ENCODE measurements at regions of chr7 and their contacts with region 1.

Region 1: GRCh38 chr7:151769188-151769841 is 107.6 kb downstream of the PRKAG2 start:
- DNase-seq: peak; percentile 81
- ATAC-seq: peak; percentile 93
- H3K4me3 Mint-ChIP-seq: peak overlapping the region; percentile 75
- H3K27ac Mint-ChIP-seq: peak overlapping the region; percentile 99
- H3K4me1 Mint-ChIP-seq: peaks cover 66% of the 10 kb centered on the region
- H3K27me3 Mint-ChIP-seq: no peaks in the 10 kb centered on the region

Region 2: DNA sequence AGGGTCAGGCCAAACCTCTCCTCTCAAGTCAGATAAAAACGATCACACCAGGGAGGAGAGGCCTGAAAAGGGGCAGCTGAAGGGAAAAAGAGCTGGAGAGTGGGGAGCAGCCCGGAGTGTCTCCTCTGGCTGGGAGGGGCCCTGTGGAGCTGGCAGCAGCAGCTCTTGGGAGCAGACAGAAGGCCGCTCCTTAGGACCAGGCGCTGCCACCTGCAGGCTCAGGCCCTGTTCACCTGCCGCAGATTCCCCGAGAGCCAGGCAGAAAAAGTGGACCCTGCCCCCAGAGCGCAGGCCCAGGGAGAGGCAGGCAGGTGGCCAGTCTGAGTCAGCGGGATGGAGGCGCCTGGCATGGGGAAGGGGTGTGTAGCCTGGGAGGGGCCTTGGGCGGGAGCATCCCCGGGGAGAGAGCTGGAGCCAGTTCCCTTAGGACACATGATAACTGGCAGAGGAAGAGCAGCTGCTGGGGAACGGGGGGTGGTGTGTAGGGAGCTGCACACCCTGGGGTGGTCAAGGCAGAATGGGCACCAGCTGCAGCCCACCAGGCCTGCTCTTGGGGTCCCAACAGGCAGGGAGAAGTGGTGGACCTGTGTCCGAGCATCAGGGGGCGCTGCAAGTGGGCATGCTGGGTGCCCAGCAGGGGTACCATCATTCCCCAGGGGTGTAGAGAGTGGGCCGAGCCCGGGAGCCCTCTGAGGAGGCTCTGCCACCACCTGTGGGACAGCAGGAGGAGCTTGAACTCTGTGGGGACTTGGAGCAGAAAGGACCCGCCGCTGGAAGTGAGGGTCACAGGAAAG is 72.4 kb before region 1 on chr7:
- CTCF ChIA-PET with region 1: no interaction called
- POLR2A ChIA-PET with region 1: no interaction called
- DNase-seq: no peak
- ATAC-seq: no peak
- H3K4me3 Mint-ChIP-seq: no peak overlapping the region
- H3K27ac Mint-ChIP-seq: no peak overlapping the region
- H3K4me1 Mint-ChIP-seq: peaks cover 6% of the 10 kb centered on the region
- H3K27me3 Mint-ChIP-seq: no peaks in the 10 kb centered on the region

Region 3: GRCh38 chr7:151754142-151754590 is 15.1 kb before region 1 on chr7:
- CTCF ChIA-PET with region 1: interaction called, 97 read pairs
- POLR2A ChIA-PET with region 1: interaction called, 11 read pairs
- DNase-seq: no peak
- ATAC-seq: no peak
- H3K4me3 Mint-ChIP-seq: no peak overlapping the region
- H3K27ac Mint-ChIP-seq: no peak overlapping the region
- H3K4me1 Mint-ChIP-seq: peaks cover 24% of the 10 kb centered on the region
- H3K27me3 Mint-ChIP-seq: no peaks in the 10 kb centered on the region

Region 4: GRCh38 chr7:151900986-151901621 is 131.8 kb after region 1 on chr7:
- CTCF ChIA-PET with region 1: no interaction called
- POLR2A ChIA-PET with region 1: no interaction called
- DNase-seq: no peak
- ATAC-seq: no peak
- H3K4me3 Mint-ChIP-seq: no peak overlapping the region
- H3K27ac Mint-ChIP-seq: no peak overlapping the region
- H3K4me1 Mint-ChIP-seq: no peaks in the 10 kb centered on the region
- H3K27me3 Mint-ChIP-seq: peaks cover 13% of the 10 kb centered on the region

Measured in activated CD8-positive, alpha-beta T cell treated with anti-CD3 and anti-CD28 coated beads, Interleukin-2, amount 10 ng/mL, durations not matched to agents 7 days and 5 days (primary cell).